Ascending aorta (tissue), 2 donors: ENCODE measurements at regions of chr1 and their contacts with region 1.

Region 1: GRCh38 chr1:2391041-2391930 is at the starts of genes MORN1 and RER1:
- DNase-seq: peak; percentile 94 to 99
- H3K4me3 ChIP-seq: peak within 1 kb of the TSS; percentile 81 to 86
- H3K27ac ChIP-seq: peak within 1 kb of the TSS; percentile 84 to 86
- H3K4me1 ChIP-seq: peaks cover 4 to 18% of the 10 kb centered on the region in 2 donors
- H3K27me3 ChIP-seq: no peaks in the 10 kb centered on the region
- CTCF ChIP-seq: no peak
- total RNA-seq, gene MORN1: 18.4 TPM
- total RNA-seq, gene RER1: 61.3 TPM

Region 2: GRCh38 chr1:2322065-2322571 is 69.2 kb before region 1 on chr1:
- intact Hi-C with region 1: loop called (anchors 2 kb)
- DNase-seq: peak; percentile 52 to 94
- H3K4me3 ChIP-seq: peak overlapping the region; percentile 28 to 54
- H3K27ac ChIP-seq: peak overlapping the region; percentile 92 to 96
- H3K4me1 ChIP-seq: peaks cover 24 to 40% of the 10 kb centered on the region in 2 donors
- H3K27me3 ChIP-seq: no peaks in the 10 kb centered on the region
- CTCF ChIP-seq: peak in 2 of 3 experiments; percentile 20 to 26

Region 3: DNA sequence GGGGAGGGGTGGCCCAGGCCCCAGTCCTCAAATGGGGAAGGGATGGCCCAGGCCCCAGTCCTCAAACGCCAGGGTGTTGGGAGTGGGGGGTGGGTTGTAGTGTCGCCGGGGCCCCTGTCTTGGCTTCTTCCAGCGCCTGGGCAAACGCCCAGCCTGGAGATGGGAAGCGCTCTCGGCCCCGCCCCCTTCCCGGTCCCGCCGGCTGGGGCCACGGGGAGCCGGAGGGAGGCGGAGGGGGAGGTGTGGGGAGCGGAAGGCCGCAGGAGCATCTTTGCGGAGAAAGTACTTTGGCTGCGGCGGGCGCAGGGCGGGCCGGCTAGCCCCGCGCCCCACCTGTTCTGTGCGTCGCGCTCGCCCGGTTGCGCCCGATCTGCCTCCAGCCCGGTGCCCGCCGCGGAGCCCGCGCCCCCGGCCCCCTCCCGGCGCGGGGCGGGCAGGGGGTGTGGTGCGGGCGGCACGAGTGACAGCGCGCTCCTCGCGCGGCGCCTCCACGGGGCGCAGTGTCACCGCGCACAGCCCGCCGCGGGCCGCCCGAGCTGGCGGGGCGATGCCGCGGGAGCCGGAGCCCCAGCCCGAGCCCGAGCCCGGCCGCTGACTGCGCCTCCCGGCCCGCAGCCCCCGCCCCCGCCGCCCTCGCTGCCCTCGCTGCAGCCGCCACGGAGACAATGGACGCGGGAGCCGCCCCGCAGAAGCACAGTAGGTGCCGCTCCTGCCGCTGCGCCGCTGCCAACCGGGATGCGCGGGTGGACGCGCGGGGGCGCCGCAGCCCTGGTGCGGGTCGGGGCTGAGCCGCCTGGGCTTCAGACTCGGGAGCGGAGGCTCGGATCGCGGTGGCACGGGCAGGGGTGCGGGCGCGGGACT is 52.2 kb after region 1 on chr1:
- intact Hi-C with region 1: no loop called
- DNase-seq: no peak
- H3K4me3 ChIP-seq: no peak overlapping the region
- H3K27ac ChIP-seq: no peak overlapping the region
- H3K4me1 ChIP-seq: no peaks in the 10 kb centered on the region
- H3K27me3 ChIP-seq: peaks cover 12% of the 10 kb centered on the region
- CTCF ChIP-seq: peak in 1 of 3 experiments; percentile 8

Region 4: GRCh38 chr1:2545759-2546514 is 154.7 kb after region 1 on chr1:
- intact Hi-C with region 1: loop called (anchors 1 kb)
- DNase-seq: peak; percentile 71 to 91
- H3K4me3 ChIP-seq: peak overlapping the region; percentile 53 to 67
- H3K27ac ChIP-seq: peak overlapping the region; percentile 92 to 95
- H3K4me1 ChIP-seq: peaks cover 13 to 36% of the 10 kb centered on the region in 2 donors
- H3K27me3 ChIP-seq: no peaks in the 10 kb centered on the region
- CTCF ChIP-seq: no peak

Region 5: DNA sequence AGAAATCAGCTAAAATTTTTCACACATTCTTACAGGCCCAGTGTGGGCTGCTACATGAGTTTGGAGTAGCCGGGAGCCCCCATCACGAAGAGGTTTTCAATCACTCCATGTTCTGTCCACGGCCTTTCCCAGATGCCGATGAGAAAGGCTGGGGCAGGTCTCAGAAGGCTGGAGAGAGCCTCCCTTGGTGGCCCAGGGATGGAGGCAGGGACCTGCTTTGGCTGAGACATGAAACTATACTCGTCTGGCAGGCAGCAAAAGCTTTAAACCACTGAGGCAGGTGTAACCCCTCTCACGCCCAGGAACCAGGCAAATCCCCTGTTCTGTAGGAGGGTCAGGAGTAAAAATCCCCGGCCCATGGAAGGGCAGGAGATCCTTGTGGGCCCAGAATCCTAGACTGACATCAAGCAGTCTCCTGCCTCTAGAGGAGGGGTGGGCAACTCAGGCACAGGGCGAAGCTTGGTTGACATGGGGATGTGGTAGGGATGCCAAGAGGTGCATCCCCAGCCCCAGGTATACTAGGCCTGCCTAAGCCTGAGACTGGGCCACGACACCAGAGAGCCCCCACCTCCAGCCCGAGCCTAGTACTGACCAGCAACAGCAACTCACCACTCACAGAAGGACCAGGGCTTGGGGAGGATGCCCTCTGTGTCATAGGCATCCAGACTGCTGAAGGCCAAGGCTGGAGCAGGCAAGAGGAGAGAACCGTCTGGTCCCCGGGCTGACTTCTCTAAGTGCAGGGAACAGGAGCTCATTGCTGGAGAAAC is 232.5 kb after region 1 on chr1:
- intact Hi-C with region 1: no loop called
- DNase-seq: peak in 1 of 2 donors; percentile 37
- H3K4me3 ChIP-seq: no peak overlapping the region
- H3K27ac ChIP-seq: no peak overlapping the region
- H3K4me1 ChIP-seq: no peaks in the 10 kb centered on the region
- H3K27me3 ChIP-seq: peaks cover 14% of the 10 kb centered on the region
- CTCF ChIP-seq: no peak